ENCODE measurements at regions of chr1 and their contacts with region 1.

Region 1: DNA sequence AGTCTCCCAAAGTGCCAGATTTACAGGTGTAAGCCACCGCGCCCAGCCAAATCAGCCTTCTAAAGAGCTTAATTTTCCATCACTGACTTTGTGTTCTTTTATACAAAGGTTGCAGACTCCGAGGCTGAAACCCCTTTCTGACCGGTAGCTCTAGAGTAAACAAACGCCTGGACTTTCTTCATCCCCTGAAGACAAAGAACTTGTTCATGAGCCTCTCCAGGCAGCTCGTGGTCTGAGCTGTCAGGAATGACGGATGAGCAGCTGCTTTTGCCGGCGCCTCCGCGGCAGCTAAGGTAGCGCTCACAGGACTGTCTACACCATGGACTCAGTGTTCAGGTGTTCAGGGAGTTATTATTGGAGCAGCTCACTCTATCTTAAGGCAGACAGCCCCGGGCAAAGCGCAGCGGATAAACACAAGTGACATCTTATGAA is 128.5 kb upstream of the ERRFI1 start:
- DNase-seq: peak; percentile 91
- H3K4me3 Mint-ChIP-seq: peak overlapping the region; percentile 13
- H3K27ac Mint-ChIP-seq: peak overlapping the region; percentile 98
- H3K4me1 Mint-ChIP-seq: peaks cover 14% of the 10 kb centered on the region
- H3K27me3 Mint-ChIP-seq: no peaks in the 10 kb centered on the region
- CTCF ChIP-seq: no peak

Region 2: GRCh38 chr1:7930645-7931445 is 223.8 kb before region 1 on chr1:
- CTCF ChIA-PET with region 1: no interaction called
- POLR2A ChIA-PET with region 1: no interaction called
- intact Hi-C with region 1: no loop called
- DNase-seq: no peak
- H3K4me3 Mint-ChIP-seq: no peak overlapping the region
- H3K27ac Mint-ChIP-seq: no peak overlapping the region
- H3K4me1 Mint-ChIP-seq: no peaks in the 10 kb centered on the region
- H3K27me3 Mint-ChIP-seq: peaks cover 50% of the 10 kb centered on the region
- CTCF ChIP-seq: no peak

Region 3: DNA sequence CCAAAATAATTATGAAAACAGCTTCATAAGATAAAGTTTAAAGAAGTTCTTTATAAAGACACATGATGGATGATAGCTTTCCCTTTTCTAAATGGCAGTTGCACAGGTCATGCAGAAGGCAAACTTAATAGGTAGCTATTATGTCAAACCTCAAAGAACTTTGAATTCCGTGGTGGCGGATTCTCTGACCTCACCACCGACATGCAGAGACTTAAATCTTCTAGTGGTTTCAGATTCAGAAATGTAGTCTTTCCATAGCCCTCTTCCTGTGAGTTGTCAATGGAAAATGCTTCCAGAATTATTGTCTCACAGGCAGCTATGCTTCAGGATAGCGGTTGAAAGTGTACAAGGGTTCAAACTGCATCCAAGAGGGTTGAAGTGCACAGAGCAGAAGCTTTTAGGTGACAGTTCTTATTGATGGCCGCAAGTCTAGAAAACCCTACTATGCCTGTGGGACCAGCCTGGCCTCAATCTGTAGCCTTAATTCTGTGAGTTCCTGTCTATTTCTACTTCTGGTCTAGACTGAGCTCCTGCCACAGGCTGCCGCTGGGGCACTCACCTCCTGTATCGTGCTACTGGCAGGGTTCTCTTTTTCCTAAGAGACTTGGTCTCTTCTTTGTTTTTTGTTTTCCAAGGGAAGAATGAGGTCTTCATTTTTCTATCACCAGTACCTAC is 11.5 kb before region 1 on chr1:
- CTCF ChIA-PET with region 1: interaction called, 5 read pairs
- POLR2A ChIA-PET with region 1: interaction called, 28 read pairs
- intact Hi-C with region 1: no loop called
- DNase-seq: no peak
- H3K4me3 Mint-ChIP-seq: no peak overlapping the region
- H3K27ac Mint-ChIP-seq: no peak overlapping the region
- H3K4me1 Mint-ChIP-seq: peaks cover 22% of the 10 kb centered on the region
- H3K27me3 Mint-ChIP-seq: no peaks in the 10 kb centered on the region
- CTCF ChIP-seq: no peak

Region 4: GRCh38 chr1:8169364-8170058 is 14.9 kb after region 1 on chr1:
- CTCF ChIA-PET with region 1: interaction called, 4 read pairs
- POLR2A ChIA-PET with region 1: interaction called, 36 read pairs
- intact Hi-C with region 1: no loop called
- DNase-seq: peak; percentile 77
- H3K4me3 Mint-ChIP-seq: peak overlapping the region; percentile 38
- H3K27ac Mint-ChIP-seq: peak overlapping the region; percentile 94
- H3K4me1 Mint-ChIP-seq: peaks cover 21% of the 10 kb centered on the region
- H3K27me3 Mint-ChIP-seq: no peaks in the 10 kb centered on the region
- CTCF ChIP-seq: no peak

Region 5: GRCh38 chr1:8174807-8175206 is 20.2 kb after region 1 on chr1:
- CTCF ChIA-PET with region 1: interaction called, 3 read pairs
- POLR2A ChIA-PET with region 1: interaction called, 19 read pairs
- intact Hi-C with region 1: no loop called
- DNase-seq: peak; percentile 75
- H3K4me3 Mint-ChIP-seq: no peak overlapping the region
- H3K27ac Mint-ChIP-seq: peak overlapping the region; percentile 93
- H3K4me1 Mint-ChIP-seq: peaks cover 14% of the 10 kb centered on the region
- H3K27me3 Mint-ChIP-seq: no peaks in the 10 kb centered on the region
- CTCF ChIP-seq: no peak

Region 6: DNA sequence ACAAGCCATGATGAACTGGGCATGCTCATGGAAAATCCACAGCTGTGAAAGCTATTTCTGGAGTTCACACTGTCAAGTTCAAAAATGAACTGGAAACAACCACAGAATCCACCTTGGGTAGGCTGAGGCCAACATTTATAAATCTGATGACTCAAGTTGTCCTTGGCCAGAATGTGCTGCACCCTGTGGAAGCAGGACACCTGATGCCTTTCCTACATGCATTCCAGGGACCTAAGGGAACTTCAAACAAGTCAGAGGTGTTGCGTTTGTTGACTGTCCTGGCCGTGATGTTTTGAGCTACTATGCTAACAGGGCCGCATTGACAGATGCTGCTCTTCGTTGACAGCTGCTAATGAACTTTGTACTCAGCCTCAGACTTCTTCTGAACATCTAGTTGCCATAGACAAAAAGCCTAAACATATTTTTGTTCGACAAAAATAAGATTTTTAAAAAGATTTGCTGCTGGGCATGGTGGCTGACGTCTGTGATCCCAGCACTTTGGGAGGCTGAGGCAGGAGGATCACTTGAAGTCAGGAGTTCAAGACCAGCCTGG is 35.4 kb after region 1 on chr1:
- CTCF ChIA-PET with region 1: interaction called, 4 read pairs
- POLR2A ChIA-PET with region 1: interaction called, 11 read pairs
- intact Hi-C with region 1: no loop called
- DNase-seq: peak; percentile 70
- H3K4me3 Mint-ChIP-seq: no peak overlapping the region
- H3K27ac Mint-ChIP-seq: peak overlapping the region; percentile 91
- H3K4me1 Mint-ChIP-seq: peaks cover 21% of the 10 kb centered on the region
- H3K27me3 Mint-ChIP-seq: no peaks in the 10 kb centered on the region
- CTCF ChIP-seq: no peak